ENCODE measurements at regions of chr14 and their contacts with region 1.

Region 1: DNA sequence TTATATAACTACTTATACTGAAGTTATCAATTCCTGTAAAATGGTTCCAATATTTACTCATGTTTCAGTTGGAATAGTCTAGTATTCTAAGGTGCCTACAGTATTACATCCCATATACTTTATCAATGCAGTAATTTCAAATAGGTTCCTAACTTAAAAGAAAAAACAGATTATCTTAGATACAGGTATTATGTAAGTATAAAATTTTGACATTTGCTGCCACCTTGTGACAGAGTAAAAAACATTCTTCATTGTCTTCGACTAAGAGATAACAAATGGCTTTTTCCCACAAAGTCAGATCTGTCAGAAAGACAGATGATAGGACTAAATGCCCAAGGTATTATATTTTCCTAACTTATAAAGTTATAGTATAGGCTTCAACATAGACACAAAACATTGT is 78.7 kb downstream of the TXNDC16 start:
- H3K4me3 Mint-ChIP-seq: no peak overlapping the region
- H3K27ac Mint-ChIP-seq: no peak overlapping the region
- H3K4me1 Mint-ChIP-seq: peaks cover 28% of the 10 kb centered on the region
- H3K27me3 Mint-ChIP-seq: no peaks in the 10 kb centered on the region

Region 2: GRCh38 chr14:51996148-51996746 is 477.3 kb before region 1 on chr14:
- intact Hi-C with region 1: loop called (anchors 5 kb)
- H3K4me3 Mint-ChIP-seq: no peak overlapping the region
- H3K27ac Mint-ChIP-seq: no peak overlapping the region
- H3K4me1 Mint-ChIP-seq: peaks cover 11% of the 10 kb centered on the region
- H3K27me3 Mint-ChIP-seq: no peaks in the 10 kb centered on the region